T-cell (primary cell): ENCODE measurements at regions of chr7 and their contacts with region 1.

Region 1: DNA sequence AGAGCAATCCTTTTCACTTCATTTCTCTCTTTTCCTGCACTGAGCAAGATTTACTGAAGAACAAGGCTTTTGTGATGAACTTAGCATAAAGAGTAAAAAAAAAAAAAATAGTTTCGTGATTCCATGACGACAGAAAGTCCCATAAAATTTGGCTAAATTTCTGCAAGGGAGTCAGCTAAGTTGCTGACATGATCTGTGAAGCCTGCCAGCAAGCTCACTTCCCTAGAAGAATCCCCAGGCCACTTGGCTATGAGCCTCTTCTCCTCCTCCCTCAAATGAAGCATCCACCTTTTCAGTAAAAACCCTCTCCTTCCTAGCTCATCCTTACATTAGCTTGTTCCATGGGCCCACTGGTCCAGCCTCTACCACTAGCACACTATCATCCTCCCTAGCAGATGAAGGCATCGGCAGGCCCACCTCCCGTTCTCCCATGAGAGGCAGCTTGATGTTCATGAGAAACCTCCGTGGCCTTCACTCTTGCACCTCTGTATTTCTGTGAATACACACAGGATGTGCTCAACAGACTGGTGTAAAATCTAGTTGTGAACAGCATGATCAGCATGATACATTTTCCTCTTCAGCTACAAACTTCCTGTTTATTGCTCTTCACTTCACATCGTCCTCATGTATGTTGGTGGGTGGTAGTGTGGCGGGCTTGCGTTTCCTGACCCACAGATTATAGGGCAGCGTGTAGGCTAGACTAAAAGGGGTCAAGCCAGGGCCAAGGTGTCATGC is 30.9 kb downstream of the GIMAP8 start:
- DNase-seq: peak in 34 of 35 experiments; percentile 18 to 76 (median 51)
- ATAC-seq: peak; percentile 54 to 73 (median 68)
- H3K4me3 ChIP-seq: peak overlapping the region in 1 of 2 donors; percentile 24
- H3K4me3 Mint-ChIP-seq: peak overlapping the region; percentile 76 to 85 (median 76)
- H3K27ac ChIP-seq: peak overlapping the region; percentile 97
- H3K27ac Mint-ChIP-seq: peak overlapping the region; percentile 100
- H3K4me1 ChIP-seq: peaks cover 73 to 77% of the 10 kb centered on the region in 2 experiments
- H3K4me1 Mint-ChIP-seq: peaks cover 98 to 99% (median 98%) of the 10 kb centered on the region in 3 donors
- H3K27me3 ChIP-seq: no peaks in the 10 kb centered on the region
- H3K27me3 Mint-ChIP-seq: no peaks in the 10 kb centered on the region

Region 2: DNA sequence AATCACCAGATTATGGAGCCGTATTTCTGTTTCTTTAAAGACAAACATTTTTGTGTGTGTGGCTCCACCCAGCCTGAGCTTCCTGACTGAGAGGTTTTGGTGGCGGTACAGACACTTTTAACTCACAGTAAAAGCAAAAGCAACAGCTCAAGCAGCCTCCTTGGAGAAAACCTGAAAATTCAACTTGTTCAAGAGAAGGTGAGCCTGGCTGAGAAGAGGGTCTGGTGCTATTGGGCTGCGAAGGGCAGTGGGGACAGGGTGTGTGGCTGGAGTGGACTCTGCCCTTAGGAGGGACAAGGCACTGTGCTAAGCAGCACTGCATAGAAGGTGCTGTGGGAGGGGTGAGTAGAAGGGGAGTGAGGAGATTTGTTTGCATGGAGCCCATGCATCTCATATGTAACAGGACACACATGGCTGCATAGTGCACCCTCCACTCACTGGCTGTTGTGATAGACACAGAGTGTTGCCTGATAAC is 33.4 kb after region 1 on chr7 and contains the start of gene GIMAP7:
- CTCF ChIA-PET with region 1: interaction called in 1 of 2 experiments, 5 read pairs
- POLR2A ChIA-PET with region 1: interaction called, 4 to 15 read pairs
- DNase-seq: peak; percentile 41 to 80 (median 68)
- ATAC-seq: peak; percentile 76 to 87 (median 78)
- H3K4me3 ChIP-seq: peak within 1 kb of the TSS; percentile 93 to 94
- H3K4me3 Mint-ChIP-seq: peak within 1 kb of the TSS; percentile 95 to 100 (median 99)
- H3K27ac ChIP-seq: peak within 1 kb of the TSS; percentile 88
- H3K27ac Mint-ChIP-seq: peak within 1 kb of the TSS; percentile 99 to 100
- H3K4me1 ChIP-seq: peaks cover 34 to 42% of the 10 kb centered on the region in 2 experiments
- H3K4me1 Mint-ChIP-seq: peaks cover 49 to 51% (median 49%) of the 10 kb centered on the region in 3 donors
- H3K27me3 ChIP-seq: no peaks in the 10 kb centered on the region
- H3K27me3 Mint-ChIP-seq: no peaks in the 10 kb centered on the region
- total RNA-seq, gene GIMAP7: 76.8 to 430 (median 392) TPM